ENCODE measurements at regions of chr5 and their contacts with region 1.

Region 1: GRCh38 chr5:79255786-79256557 is 20.0 kb downstream of the JMY start:
- DNase-seq: peak; percentile 66
- H3K4me3 ChIP-seq: no peak overlapping the region
- H3K27ac ChIP-seq: no peak overlapping the region
- H3K4me1 ChIP-seq: peaks cover 6% of the 10 kb centered on the region
- H3K27me3 ChIP-seq: no peaks in the 10 kb centered on the region
- CTCF ChIP-seq: peak; percentile 89

Region 2: GRCh38 chr5:78936548-78936947 is 319.4 kb before region 1 on chr5:
- CTCF ChIA-PET with region 1: no interaction called
- POLR2A ChIA-PET with region 1: no interaction called
- intact Hi-C with region 1: no loop called
- DNase-seq: no peak
- H3K4me3 ChIP-seq: no peak overlapping the region
- H3K27ac ChIP-seq: no peak overlapping the region
- H3K4me1 ChIP-seq: no peaks in the 10 kb centered on the region
- H3K27me3 ChIP-seq: no peaks in the 10 kb centered on the region
- CTCF ChIP-seq: no peak

Region 3: DNA sequence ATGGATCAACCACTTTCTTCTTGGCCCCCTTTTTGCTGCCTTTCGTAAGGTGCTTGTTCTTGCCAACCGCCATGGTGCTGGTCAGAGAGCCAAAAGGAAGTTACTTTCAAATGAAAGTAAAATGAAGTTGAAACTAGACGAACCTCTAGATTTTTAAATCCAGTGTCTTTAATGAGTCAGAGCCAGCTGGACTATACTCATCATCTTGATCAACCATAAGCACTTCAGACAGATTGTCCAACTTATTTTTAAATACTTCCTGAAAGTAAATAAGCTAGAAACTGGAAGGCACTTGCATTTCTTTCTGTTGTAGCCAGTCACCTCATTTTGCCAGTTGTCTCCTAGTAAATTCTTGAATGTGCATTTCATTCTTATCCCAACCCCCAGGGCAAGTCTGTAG is 28.9 kb after region 1 on chr5:
- CTCF ChIA-PET with region 1: interaction called, 10 read pairs
- POLR2A ChIA-PET with region 1: no interaction called
- intact Hi-C with region 1: no loop called
- DNase-seq: no peak
- H3K4me3 ChIP-seq: no peak overlapping the region
- H3K27ac ChIP-seq: no peak overlapping the region
- H3K4me1 ChIP-seq: no peaks in the 10 kb centered on the region
- H3K27me3 ChIP-seq: no peaks in the 10 kb centered on the region
- CTCF ChIP-seq: no peak

Region 4: DNA sequence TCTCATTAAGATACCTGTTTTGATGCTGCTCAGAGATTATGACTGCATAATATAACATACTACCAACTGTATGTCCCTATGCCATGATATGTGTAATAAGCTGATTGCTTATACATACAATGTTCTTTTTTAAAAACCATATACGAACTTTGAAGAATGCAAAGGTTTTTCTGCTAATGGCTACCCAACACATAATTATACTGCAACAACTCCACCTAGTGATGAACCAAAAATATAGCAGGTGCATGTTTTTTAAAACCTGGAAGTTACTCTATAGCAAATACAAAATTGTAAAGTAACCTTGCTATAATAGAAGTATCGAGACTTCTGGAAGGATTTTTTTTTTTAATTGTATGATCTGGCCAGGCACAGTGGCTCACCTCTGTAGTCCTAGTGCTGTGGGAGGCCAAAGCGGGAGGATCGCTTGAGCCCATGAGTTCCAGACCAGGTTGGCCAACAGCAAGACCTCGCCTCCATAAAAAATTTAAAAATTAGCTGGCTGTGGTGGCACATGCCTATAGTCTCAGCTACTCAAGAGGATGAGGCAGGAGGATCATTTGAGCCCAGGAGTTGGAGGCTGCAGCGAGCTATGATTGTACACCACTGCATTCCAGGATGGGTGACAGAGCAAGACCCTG is 208.8 kb after region 1 on chr5:
- CTCF ChIA-PET with region 1: no interaction called
- POLR2A ChIA-PET with region 1: no interaction called
- intact Hi-C with region 1: loop called (anchors 1 kb)
- DNase-seq: peak; percentile 53
- H3K4me3 ChIP-seq: no peak overlapping the region
- H3K27ac ChIP-seq: no peak overlapping the region
- H3K4me1 ChIP-seq: peaks cover 4% of the 10 kb centered on the region
- H3K27me3 ChIP-seq: no peaks in the 10 kb centered on the region
- CTCF ChIP-seq: peak; percentile 78

Region 5: DNA sequence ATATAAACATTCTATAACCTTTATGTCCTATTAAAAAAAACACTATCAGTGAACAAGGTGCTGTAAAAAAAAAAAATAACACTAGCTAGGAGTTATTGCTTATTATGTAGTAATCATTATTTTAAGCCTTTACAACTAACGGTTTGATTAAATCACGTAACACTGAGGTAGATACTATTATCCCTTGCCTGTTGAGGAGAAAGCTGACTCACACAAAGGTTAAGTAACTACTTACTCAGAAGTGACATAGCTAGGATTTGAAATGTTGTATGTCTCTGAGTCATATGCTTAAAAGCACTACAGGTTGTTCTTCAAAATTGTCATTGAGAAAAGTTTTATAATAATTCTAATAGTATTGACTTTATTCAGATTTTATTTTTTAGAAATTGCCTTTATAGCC is 365.1 kb after region 1 on chr5:
- CTCF ChIA-PET with region 1: no interaction called
- POLR2A ChIA-PET with region 1: no interaction called
- intact Hi-C with region 1: no loop called
- DNase-seq: no peak
- H3K4me3 ChIP-seq: no peak overlapping the region
- H3K27ac ChIP-seq: no peak overlapping the region
- H3K4me1 ChIP-seq: no peaks in the 10 kb centered on the region
- H3K27me3 ChIP-seq: no peaks in the 10 kb centered on the region
- CTCF ChIP-seq: no peak